GM23248 (cell line): ENCODE measurements at regions of chr1 and their contacts with region 1.

Region 1: DNA sequence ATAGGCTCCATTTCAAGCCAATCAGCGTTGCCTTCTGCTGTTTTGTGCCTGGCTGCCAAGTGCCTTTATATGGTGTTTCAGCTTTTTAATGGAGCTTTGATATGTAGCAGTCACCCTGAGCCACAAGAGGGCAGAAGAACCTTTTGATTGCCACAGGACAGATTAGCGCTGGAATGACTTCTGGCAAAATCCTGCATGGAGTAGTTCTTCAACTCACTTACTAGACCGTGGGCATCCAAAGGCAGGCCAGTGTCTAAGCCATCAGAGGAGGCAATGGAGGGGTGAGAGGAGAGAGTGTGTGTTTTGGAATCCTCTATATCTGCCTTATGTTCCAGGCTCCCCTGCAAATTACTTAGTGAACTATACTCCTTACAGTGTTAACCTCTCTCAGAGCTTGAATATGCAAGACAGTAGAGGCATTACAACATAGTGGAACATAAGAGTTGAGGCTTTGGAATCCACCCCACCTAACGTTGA is 56.2 kb downstream of the ST3GAL3 start:
- DNase-seq: peak; percentile 93
- H3K4me3 ChIP-seq: no peak overlapping the region
- H3K27ac ChIP-seq: no peak overlapping the region
- H3K4me1 ChIP-seq: peaks cover 10% of the 10 kb centered on the region
- H3K27me3 ChIP-seq: no peaks in the 10 kb centered on the region

Region 2: GRCh38 chr1:43554444-43554992 is 209.0 kb before region 1 on chr1:
- in situ Hi-C with region 1: no loop called
- DNase-seq: peak; percentile 76
- H3K4me3 ChIP-seq: no peak overlapping the region
- H3K27ac ChIP-seq: no peak overlapping the region
- H3K4me1 ChIP-seq: peaks cover 10% of the 10 kb centered on the region
- H3K27me3 ChIP-seq: no peaks in the 10 kb centered on the region

Region 3: GRCh38 chr1:43582162-43582589 is 181.4 kb before region 1 on chr1:
- in situ Hi-C with region 1: no loop called
- DNase-seq: peak; percentile 97
- H3K4me3 ChIP-seq: no peak overlapping the region
- H3K27ac ChIP-seq: no peak overlapping the region
- H3K4me1 ChIP-seq: peaks cover 3% of the 10 kb centered on the region
- H3K27me3 ChIP-seq: no peaks in the 10 kb centered on the region

Region 4: GRCh38 chr1:43934101-43934985 is 170.8 kb after region 1 on chr1:
- in situ Hi-C with region 1: loop called (anchors 5 kb)
- DNase-seq: peak; percentile 78
- H3K4me3 ChIP-seq: peak overlapping the region; percentile 66; the same call in 1 of the 2 replicates
- H3K27ac ChIP-seq: no peak overlapping the region
- H3K4me1 ChIP-seq: peaks cover 21% of the 10 kb centered on the region
- H3K27me3 ChIP-seq: no peaks in the 10 kb centered on the region